Activated T-helper 2 cell treated with anti-CD3 and anti-CD28 coated beads, Interferon-gamma antibody, Interleukin-2, Interleukin-4, amounts not matched to agents 10 μg/mL and 5 μg/mL and 100 μg/mL, durations not matched to agents 14 hours and 24 hours and 36 hours (primary cell): ENCODE measurements at regions of chr15 and their contacts with region 1.

Region 1: DNA sequence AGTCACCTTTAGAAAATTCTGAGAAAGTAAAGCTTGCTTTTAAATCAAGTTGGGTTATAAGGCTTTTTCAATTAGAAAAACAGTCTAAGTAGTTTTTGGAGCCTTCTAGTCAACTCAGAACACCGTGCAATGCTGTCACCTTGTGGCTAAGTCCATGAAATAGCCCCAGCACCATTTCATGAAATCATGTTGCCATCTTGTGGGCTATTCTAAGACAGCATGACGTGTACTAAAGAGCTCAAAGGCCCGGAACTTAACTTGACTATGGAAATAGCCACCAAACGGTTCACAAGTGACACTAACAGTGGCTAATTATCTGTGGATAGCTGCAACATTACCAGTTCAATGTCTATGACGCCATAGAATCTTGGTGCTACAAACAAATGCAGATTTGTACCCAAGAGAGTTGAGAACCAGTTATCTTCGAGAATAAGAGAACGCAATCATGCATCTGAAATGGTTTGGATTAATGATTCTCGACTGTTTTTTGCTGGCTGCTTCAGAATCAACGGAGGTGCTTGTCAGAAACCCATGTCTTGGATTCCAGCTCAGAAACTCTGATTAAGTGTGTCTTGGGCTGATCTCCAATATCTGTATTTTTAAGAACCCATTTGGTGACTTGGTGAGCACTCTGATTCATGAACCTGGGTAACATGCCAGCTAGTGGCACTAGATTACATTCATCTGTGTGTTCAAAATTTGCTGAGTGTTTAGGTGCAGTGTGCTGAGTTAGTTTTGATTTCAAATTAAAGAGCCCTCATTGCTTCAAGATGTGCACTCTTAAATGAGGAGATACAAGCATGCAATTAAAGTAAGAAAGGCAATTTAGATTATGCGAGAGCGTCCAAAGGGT is 111.2 kb upstream of the MCTP2 start:
- DNase-seq: peak; percentile 45
- H3K4me3 Mint-ChIP-seq: no peak overlapping the region
- H3K27ac Mint-ChIP-seq: no peak overlapping the region
- H3K4me1 Mint-ChIP-seq: peaks cover 1% of the 10 kb centered on the region
- H3K27me3 Mint-ChIP-seq: peaks cover 11% of the 10 kb centered on the region

Region 2: DNA sequence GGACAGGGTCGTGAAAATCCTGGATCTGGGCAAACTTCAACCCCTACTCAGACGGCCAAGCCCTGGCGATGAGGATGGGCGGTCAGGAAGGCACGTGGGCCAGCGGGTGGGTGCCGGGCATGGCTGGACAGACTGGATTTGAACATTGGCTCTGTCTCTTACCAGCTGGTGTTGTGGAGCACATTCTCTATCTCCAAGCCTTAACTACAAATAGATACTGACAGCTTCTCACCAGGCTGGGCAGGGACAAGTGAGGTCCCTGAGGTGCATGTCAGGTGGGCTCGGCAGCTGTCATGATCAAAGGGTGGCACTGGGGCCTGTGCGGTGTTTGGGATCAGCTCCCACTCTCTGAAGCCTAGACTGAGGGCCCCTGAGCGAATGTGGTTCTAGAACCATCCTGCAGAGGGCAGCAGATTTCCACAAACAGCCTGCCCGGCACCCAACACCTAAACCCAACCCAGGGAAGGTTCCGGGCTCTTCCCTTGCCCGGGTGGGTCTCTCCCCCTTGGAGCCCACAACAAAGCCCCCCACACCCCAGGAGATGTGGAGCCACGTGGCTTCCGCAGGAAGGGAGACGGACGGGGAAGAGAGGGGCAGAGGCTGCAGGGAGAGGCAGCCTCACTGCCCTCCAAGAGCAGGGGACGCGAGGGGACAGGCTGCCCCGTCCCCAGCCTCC is 1089.6 kb before region 1 on chr15:
- intact Hi-C with region 1: loop called (anchors 1 kb)
- DNase-seq: peak; percentile 55
- H3K4me3 Mint-ChIP-seq: no peak overlapping the region
- H3K27ac Mint-ChIP-seq: no peak overlapping the region
- H3K4me1 Mint-ChIP-seq: peaks cover 3% of the 10 kb centered on the region
- H3K27me3 Mint-ChIP-seq: no peaks in the 10 kb centered on the region

Region 3: GRCh38 chr15:93087825-93088199 is 1032.3 kb before region 1 on chr15:
- intact Hi-C with region 1: loop called (anchors 2 kb)
- DNase-seq: peak; percentile 65
- H3K4me3 Mint-ChIP-seq: peak overlapping the region; percentile 82
- H3K27ac Mint-ChIP-seq: no peak overlapping the region
- H3K4me1 Mint-ChIP-seq: peaks cover 14% of the 10 kb centered on the region
- H3K27me3 Mint-ChIP-seq: peaks cover 60% of the 10 kb centered on the region

Region 4: DNA sequence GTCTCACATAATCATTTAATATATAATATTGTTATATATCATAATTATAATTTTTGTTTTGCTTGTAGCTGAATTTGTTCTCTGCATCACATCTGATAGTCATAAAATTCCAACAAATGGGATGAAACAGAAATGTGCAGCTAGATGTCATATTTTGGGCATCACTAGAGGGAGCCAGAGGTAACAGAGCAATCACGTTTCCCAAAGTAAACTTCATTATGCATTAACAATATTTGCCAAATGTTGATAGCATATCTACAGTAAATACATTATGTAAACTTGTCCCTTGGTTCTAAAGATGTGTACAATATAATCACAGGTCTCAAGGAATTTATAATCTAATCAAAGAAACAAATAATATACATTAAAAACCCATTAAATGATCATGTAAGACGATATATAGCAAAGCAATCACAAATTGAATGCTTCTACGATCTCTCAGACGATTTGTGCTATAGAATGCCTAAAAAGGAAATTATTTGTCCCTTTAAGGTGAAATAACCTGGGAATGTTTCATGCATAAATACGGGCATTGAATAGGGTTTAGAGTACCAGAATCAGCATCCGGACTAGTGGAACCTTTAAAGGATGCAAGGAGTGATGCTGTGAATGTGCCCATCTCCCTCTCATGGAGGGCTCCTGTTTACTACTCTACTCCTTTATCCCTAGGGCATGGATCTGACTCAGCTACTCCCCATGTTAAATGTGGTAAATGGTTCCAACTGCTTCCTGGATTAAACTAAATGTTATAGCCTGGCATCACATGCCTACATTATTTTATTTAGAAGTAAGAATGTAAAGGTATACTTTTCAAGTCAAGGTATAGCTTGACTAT is 122.8 kb before region 1 on chr15:
- intact Hi-C with region 1: loop called (anchors 1 kb)
- DNase-seq: no peak
- H3K4me3 Mint-ChIP-seq: no peak overlapping the region
- H3K27ac Mint-ChIP-seq: no peak overlapping the region
- H3K4me1 Mint-ChIP-seq: no peaks in the 10 kb centered on the region
- H3K27me3 Mint-ChIP-seq: no peaks in the 10 kb centered on the region